ENCODE measurements at regions of chr4 and their contacts with region 1.

Region 1: GRCh38 chr4:145936142-145936996 is 2.3 kb downstream of the ZNF827 start:
- DNase-seq: peak; percentile 62 to 79 (median 76)
- H3K4me3 ChIP-seq: peak overlapping the region; percentile 90
- H3K27ac ChIP-seq: peak overlapping the region; percentile 95
- H3K4me1 ChIP-seq: peaks cover 2% of the 10 kb centered on the region
- H3K27me3 ChIP-seq: no peaks in the 10 kb centered on the region
- CTCF ChIP-seq: no peak
- EP300 ChIP-seq: no peak
- POLR2A ChIP-seq: no peak

Region 2: GRCh38 chr4:145154573-145154972 is 781.8 kb before region 1 on chr4:
- intact Hi-C with region 1: no loop called
- DNase-seq: no peak
- H3K4me3 ChIP-seq: no peak overlapping the region
- H3K27ac ChIP-seq: no peak overlapping the region
- H3K4me1 ChIP-seq: no peaks in the 10 kb centered on the region
- H3K27me3 ChIP-seq: no peaks in the 10 kb centered on the region
- CTCF ChIP-seq: no peak
- EP300 ChIP-seq: no peak
- POLR2A ChIP-seq: no peak

Region 3: GRCh38 chr4:145487631-145488030 is 448.7 kb before region 1 on chr4:
- intact Hi-C with region 1: loop called in 1 of 4 experiments (anchors 5 kb)
- DNase-seq: no peak
- H3K4me3 ChIP-seq: no peak overlapping the region
- H3K27ac ChIP-seq: no peak overlapping the region
- H3K4me1 ChIP-seq: peaks cover 2% of the 10 kb centered on the region
- H3K27me3 ChIP-seq: no peaks in the 10 kb centered on the region
- CTCF ChIP-seq: no peak
- EP300 ChIP-seq: no peak
- POLR2A ChIP-seq: no peak

Region 4: GRCh38 chr4:145618932-145619638 is 317.3 kb before region 1 on chr4 and contains the start of gene MMAA:
- intact Hi-C with region 1: loop called in 1 of 4 experiments (anchors 5 kb)
- DNase-seq: peak; percentile 95 to 97 (median 97)
- H3K4me3 ChIP-seq: peak within 1 kb of the TSS; percentile 80
- H3K27ac ChIP-seq: peak within 1 kb of the TSS; percentile 64 to 91
- H3K4me1 ChIP-seq: peaks cover 3% of the 10 kb centered on the region
- H3K27me3 ChIP-seq: no peaks in the 10 kb centered on the region
- CTCF ChIP-seq: peak; percentile 75 to 90 (median 78)
- EP300 ChIP-seq: no peak
- POLR2A ChIP-seq: peak; percentile 91
- total RNA-seq, gene MMAA: 2.1 to 8.6 (median 6.2) TPM

Region 5: DNA sequence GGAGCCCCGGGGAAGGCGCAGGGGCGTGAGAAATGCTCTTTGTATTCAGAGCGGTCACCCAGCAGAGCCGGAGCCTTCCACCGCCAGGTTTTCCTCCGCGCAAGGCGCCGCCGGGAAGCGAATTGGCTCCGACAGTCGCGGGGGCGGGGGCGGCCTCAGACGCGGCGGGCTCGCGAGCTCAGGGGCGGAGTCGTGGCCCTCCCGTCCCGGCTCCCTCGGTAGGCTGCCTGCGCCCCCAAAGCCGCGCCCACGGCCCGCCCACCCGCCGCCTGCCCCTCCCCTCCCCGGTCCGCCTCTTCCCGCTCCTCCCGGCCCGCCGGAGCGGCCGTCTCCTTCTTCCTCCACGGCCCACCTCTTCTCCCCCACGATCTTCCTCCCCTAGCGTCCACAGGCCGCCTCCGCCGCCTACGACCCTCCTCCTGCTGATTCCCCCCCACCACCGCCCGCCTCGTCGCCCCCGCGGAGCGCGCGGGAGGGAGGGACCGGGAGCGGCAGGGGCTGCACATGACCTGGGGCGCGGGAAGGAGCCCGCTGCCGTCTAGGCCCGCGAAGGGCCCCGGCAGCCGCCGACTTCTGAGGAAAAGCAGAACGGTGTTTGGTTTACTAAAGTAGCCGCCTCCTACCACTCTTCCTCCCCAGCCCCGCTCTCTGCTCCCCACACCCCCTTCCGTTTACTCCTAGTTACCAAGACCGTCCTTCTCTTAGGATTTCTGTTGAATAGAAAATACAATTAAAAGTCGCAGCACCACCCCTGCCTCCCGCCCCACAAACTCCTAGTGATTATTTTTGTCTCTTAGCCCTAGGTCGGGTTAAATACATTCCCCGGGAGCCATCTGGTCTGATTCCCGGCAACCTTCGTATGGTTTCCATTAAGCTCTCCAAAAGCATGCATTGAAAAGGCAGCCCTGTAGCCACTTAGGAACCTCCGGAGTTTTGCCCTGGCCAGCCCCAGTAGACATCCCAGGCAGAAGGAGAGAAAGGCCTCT is 203.2 kb before region 1 on chr4:
- intact Hi-C with region 1: loop called in 2 of 4 experiments (anchors 5 to 10 kb)
- DNase-seq: peak; percentile 94 to 96 (median 96)
- H3K4me3 ChIP-seq: peak overlapping the region; percentile 57
- H3K27ac ChIP-seq: peak overlapping the region; percentile 81 to 98
- H3K4me1 ChIP-seq: peaks cover 5% of the 10 kb centered on the region
- H3K27me3 ChIP-seq: no peaks in the 10 kb centered on the region
- CTCF ChIP-seq: peak in 2 of 3 donors; percentile 22 to 29
- EP300 ChIP-seq: no peak
- POLR2A ChIP-seq: peak; percentile 85

Region 6: GRCh38 chr4:145881989-145882388 is 54.4 kb before region 1 on chr4:
- intact Hi-C with region 1: loop called in 2 of 4 experiments (anchors 5 to 10 kb)
- DNase-seq: no peak
- H3K4me3 ChIP-seq: no peak overlapping the region
- H3K27ac ChIP-seq: peak overlapping the region in 1 of 2 donors; percentile 22
- H3K4me1 ChIP-seq: peaks cover 22% of the 10 kb centered on the region
- H3K27me3 ChIP-seq: no peaks in the 10 kb centered on the region
- CTCF ChIP-seq: no peak
- EP300 ChIP-seq: no peak
- POLR2A ChIP-seq: no peak

Region 7: DNA sequence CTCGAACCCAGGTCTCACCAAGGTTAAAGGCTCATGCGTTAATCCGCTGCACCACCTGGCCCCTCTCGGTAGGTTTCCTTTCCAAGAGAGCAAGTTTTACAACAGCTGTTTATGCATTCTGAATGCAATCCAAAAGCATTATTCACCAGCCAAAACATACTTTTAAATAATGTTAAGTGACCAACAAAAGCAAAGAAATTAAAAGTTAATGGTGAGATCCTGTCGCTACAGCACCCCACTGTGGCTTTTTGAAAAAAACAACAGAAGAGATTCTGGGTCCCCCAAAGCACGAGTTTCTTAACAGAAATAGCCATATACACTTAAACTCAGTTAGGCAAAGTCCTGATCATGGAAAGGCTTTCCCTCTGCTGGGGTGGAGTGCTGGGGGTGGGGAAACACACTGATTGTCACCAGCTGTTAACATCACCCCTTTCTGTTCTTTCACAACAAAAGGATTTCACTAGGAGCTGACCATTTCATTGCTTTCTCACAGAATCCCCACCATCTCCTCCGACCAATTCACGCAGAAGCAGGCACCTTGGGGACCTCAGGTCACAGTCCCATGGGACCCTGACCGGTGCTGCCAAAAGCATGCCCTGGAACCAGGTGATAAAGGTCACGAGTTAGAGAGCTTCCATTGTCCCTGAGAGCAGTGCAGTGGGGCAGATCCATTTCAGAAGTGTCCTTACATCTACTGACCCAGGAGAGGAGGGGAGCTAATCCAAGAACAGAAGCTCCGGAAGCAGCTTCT is 49.0 kb before region 1 on chr4:
- intact Hi-C with region 1: loop called in 2 of 4 experiments (anchors 5 to 10 kb)
- DNase-seq: peak; percentile 49 to 58 (median 52)
- H3K4me3 ChIP-seq: no peak overlapping the region
- H3K27ac ChIP-seq: no peak overlapping the region
- H3K4me1 ChIP-seq: peaks cover 7% of the 10 kb centered on the region
- H3K27me3 ChIP-seq: no peaks in the 10 kb centered on the region
- CTCF ChIP-seq: peak in 1 of 3 donors; percentile 10
- EP300 ChIP-seq: no peak
- POLR2A ChIP-seq: no peak

Region 8: DNA sequence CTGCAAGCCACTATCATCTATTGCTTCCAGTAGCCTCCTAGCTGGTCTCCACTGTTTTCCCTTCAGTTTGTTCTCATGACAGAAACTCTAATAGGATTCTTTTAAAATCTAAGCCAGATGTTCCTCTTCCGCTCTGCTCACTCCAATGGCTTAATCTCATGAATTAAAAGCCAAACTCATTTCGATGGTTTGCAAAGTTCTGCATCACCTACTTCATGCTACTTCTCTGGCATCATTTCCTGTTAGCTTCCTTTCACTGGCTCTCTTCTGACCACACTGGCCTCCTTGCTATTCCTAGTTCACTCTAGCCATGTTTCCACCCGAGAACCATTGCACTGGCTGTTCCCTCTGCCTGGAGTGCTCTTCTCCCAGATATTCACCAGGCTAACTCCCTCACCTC is 137.1 kb after region 1 on chr4:
- intact Hi-C with region 1: no loop called
- DNase-seq: no peak
- H3K4me3 ChIP-seq: no peak overlapping the region
- H3K27ac ChIP-seq: no peak overlapping the region
- H3K4me1 ChIP-seq: no peaks in the 10 kb centered on the region
- H3K27me3 ChIP-seq: no peaks in the 10 kb centered on the region
- CTCF ChIP-seq: no peak
- EP300 ChIP-seq: no peak
- POLR2A ChIP-seq: no peak

Measured in ovary (tissue), 10 donors.